Vagina (tissue), 2 donors: ENCODE measurements at regions of chr10 and their contacts with region 1.

Region 1: GRCh38 chr10:55979203-55979602 is 381.9 kb downstream of the ZWINT start:
- DNase-seq: no peak
- H3K4me3 ChIP-seq: no peak overlapping the region
- H3K27ac ChIP-seq: no peak overlapping the region
- H3K4me1 ChIP-seq: no peaks in the 10 kb centered on the region
- H3K27me3 ChIP-seq: no peaks in the 10 kb centered on the region
- CTCF ChIP-seq: no peak
- POLR2A ChIP-seq: no peak

Region 2: DNA sequence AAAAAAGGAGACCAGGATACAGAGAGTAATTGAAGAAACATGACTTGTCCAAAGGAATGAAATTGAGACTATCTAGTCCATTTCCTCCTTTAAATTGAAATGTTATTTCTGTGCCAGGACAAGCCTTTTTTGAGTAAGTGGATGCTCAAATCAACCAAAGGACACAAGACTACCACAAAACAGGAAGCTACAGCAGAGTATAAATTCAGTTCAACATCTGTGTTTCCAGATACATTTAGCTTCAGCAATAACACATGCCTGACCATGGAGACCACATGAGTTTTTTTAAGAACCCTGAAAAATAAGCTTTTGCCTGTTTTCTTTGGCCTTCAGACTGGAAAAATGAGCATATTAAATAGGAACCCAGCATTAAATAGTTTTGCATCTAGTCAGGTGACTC is 325.7 kb before region 1 on chr10:
- intact Hi-C with region 1: loop called (anchors 10 kb)
- DNase-seq: no peak
- H3K4me3 ChIP-seq: no peak overlapping the region
- H3K27ac ChIP-seq: no peak overlapping the region
- H3K4me1 ChIP-seq: no peaks in the 10 kb centered on the region
- H3K27me3 ChIP-seq: no peaks in the 10 kb centered on the region
- CTCF ChIP-seq: no peak
- POLR2A ChIP-seq: no peak

Region 3: GRCh38 chr10:56142092-56142728 is 163.0 kb after region 1 on chr10:
- intact Hi-C with region 1: no loop called
- DNase-seq: no peak
- H3K4me3 ChIP-seq: no peak overlapping the region
- H3K27ac ChIP-seq: no peak overlapping the region
- H3K4me1 ChIP-seq: no peaks in the 10 kb centered on the region
- H3K27me3 ChIP-seq: no peaks in the 10 kb centered on the region
- CTCF ChIP-seq: no peak
- POLR2A ChIP-seq: no peak

Region 4: GRCh38 chr10:57288754-57289153 is 1309.6 kb after region 1 on chr10:
- intact Hi-C with region 1: no loop called
- DNase-seq: no peak
- H3K4me3 ChIP-seq: no peak overlapping the region
- H3K27ac ChIP-seq: no peak overlapping the region
- H3K4me1 ChIP-seq: no peaks in the 10 kb centered on the region
- H3K27me3 ChIP-seq: no peaks in the 10 kb centered on the region
- CTCF ChIP-seq: no peak
- POLR2A ChIP-seq: no peak